GM10248 (cell line): ENCODE measurements at regions of chr17 and their contacts with region 1.

Region 1: DNA sequence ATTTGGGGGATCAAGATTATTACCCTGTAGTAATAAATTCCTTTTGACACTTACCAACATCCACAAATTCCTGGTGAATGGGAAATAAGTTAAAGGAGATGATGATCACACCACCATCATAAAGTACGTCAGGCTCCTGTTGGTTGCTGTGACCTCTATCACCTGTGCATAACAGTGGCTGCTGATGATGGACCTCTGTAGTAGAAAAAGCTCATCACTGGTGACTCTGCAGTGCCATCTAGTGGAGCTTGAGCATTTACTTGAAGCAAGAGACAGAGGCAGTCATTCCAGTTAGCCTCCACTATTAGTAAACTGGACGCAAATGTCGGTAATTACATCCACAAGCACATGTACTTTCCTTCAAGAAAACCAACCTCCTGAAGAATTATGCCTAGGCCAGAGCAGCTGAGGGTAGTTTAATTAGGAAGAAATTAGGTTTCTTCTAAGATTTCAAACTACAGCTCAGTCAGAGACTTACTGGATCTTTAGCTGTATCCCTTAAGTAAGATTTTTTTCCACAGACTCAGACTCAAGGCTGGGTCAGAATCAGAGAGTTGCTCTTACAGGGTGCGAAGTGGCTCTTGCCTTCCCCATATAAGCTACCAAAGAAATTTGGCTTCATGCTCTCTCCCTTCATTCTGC is 39.3 kb downstream of the CYB561 start:
- DNase-seq: peak; percentile 71
- CTCF ChIP-seq: peak; percentile 74

Region 2: DNA sequence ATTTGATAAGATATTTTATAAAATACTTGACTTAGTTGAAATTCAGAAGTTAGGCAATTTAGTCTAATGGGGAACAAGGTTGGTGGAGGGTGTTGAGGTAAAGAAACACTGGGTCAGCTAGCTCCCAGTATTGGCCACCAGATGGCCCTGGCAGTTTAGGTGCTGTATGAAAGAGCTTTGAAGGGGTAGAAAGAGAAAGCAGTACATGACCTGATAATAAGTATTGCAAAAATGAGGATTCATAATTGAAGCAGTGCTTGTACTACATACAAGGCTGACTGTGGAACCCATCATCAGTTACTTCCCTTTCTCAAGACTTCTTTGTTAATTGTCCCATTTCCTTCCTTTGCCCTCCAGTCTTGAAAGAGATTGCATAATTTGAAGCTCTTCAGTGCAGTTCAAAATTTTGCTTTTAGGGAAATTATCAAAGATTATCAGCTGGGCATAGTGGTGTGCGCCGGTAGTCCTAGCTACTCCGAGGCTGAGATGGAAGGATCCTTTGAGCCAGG is 411.4 kb before region 1 on chr17:
- CTCF ChIA-PET with region 1: interaction called, 35 read pairs
- POLR2A ChIA-PET with region 1: no interaction called
- DNase-seq: peak; percentile 20
- CTCF ChIP-seq: peak; percentile 45

Region 3: DNA sequence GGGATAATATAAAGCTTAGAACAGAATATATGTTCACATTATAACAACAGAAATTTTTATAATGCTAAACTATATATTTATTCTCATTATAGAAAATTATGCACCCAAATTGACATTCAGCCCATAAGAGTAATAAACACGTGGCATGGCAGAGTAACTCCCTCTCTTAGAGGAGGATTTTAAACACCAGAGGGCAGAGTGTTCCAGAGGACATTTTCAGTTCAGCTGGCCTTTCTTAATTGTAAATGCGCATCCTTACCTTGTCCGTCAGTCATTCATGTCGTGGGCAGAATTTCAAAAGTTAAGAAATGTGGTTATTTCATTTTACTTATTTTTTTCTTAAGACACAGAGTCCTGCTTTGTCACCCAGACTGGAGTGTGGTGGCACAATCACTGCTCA is 293.6 kb before region 1 on chr17:
- CTCF ChIA-PET with region 1: interaction called, 11 read pairs
- POLR2A ChIA-PET with region 1: no interaction called
- DNase-seq: peak; percentile 11
- CTCF ChIP-seq: no peak

Region 4: GRCh38 chr17:63395075-63395805 is 11.6 kb before region 1 on chr17:
- CTCF ChIA-PET with region 1: interaction called, 34 read pairs
- POLR2A ChIA-PET with region 1: no interaction called
- DNase-seq: no peak
- CTCF ChIP-seq: no peak

Region 5: DNA sequence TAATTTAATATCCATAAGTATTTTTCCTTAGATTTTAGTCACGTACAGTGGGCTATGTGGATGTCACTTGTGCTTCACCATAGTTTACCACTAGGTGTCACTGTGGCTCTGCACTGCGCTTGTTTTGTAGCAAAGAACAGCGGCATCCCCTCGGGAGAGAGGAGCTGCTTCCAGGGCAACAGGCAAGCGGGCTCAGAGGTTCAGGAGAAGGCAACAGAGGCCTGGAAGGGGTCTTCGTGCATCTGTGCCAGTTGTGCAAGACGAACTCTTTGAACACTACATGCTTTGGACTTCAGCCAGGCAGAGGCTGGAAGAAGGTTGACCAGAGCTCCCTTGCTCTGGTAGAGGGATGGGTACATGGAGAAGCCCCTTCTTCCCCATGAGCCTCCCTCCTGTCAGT is 18.7 kb after region 1 on chr17:
- CTCF ChIA-PET with region 1: interaction called, 51 read pairs
- POLR2A ChIA-PET with region 1: no interaction called
- DNase-seq: peak; percentile 78
- CTCF ChIP-seq: peak; percentile 89